ENCODE measurements at regions of chr9 and their contacts with region 1.

Region 1: DNA sequence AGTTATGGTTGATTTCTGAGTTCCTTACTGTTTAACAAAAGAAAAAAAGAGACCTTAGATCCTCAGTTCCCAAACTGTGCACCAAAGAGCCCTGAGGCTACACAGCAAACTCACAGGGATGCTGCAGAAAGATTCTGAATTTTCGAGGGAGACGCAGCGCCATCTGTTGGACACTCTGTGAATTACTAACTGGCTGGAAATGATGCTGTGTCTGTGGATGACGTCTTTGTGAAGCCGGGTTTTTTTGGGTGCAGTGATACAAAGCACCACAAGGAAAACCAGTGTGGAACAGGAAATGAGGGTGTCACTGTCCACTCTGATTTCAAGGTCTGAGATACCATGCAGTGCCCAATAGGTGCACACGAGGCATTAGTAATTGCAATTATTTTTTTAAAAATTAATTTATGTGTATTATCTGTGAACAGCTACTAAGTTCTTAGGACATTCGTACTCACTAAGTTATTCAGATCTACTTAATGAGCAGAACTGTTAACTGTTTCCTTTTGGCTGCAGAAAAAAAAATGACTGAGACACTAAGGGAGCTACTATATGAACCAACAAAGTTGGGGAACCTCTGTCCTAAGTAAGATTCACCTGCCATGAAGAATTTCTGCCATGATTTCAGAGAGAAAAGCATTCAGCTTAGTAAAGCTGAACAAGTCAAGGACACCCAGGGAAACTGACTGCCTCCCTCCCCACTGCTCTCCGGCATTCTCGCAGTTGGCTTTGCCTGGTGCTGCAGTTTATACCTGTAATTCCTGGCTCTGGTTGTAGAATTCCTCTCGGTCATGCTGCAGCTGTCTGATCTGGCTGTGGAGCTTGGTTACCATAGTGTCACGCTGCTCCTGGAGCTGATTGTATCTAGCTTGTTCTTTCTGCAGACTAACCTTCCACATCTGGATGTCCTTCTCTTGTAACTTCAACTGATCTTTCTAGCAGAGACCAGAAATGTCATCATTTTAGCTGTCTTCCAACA is 23.4 kb downstream of the SPACA9 start:
- DNase-seq: peak; percentile 40
- H3K4me3 ChIP-seq: no peak overlapping the region
- H3K27me3 ChIP-seq: no peaks in the 10 kb centered on the region
- CTCF ChIP-seq: peak; percentile 91

Region 2: DNA sequence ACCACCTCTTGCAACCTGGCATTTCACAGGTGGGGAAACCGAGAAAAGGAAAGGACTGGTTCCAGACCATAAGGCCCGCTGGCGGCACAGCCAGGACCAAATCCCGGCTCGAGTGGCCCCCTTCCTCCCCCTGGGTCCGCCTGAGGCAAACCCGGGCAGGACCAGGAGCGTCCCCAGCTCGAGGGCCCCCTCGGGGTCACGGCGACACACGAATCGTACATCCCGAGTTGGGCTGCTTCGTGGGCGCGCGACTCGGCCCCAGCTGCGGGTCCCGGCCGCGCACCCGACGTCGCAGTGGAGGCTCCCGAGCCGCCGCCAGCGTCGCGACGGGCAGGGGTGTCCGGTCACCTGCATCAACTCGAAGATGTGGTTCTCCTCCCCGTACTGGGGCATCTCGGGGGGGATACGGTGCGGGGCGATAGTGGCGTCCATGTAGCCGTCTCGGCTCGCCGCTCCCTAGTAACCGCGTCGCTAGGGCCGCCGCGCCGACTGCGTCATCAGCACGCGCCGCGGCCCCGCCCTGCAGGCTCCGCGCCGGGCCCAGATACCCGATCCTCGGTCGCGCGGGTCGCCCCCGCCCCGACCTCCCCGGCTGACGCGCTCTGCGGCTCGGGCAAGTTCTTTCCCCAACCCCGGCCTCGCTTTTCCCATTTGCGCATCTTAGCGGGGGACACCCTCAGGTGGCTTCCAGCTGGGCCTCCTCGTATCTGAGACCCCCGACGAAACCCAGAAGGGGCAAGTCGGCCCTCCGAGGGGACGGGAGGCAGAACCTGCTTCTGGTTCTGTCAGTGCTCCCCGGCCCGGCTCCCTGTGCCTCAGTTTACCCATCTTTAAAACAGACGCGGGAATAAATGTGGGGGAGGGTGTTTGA is 24.1 kb before region 1 on chr9 and contains the start of gene AK8:
- CTCF ChIA-PET with region 1: interaction called, 21 read pairs
- POLR2A ChIA-PET with region 1: no interaction called
- DNase-seq: no peak
- H3K4me3 ChIP-seq: peak within 1 kb of the TSS; percentile 95
- H3K27me3 ChIP-seq: no peaks in the 10 kb centered on the region
- CTCF ChIP-seq: no peak
- polyA plus RNA-seq, gene AK8: 0.29 and 0.53 TPM in 2 replicates

Region 3: GRCh38 chr9:132919614-132920268 is 17.6 kb after region 1 on chr9:
- CTCF ChIA-PET with region 1: interaction called, 50 read pairs
- POLR2A ChIA-PET with region 1: no interaction called
- DNase-seq: no peak
- H3K4me3 ChIP-seq: no peak overlapping the region
- H3K27me3 ChIP-seq: no peaks in the 10 kb centered on the region
- CTCF ChIP-seq: no peak

Region 4: GRCh38 chr9:132927704-132928103 is 25.6 kb after region 1 on chr9:
- CTCF ChIA-PET with region 1: interaction called, 13 read pairs
- POLR2A ChIA-PET with region 1: no interaction called
- DNase-seq: no peak
- H3K4me3 ChIP-seq: no peak overlapping the region
- H3K27me3 ChIP-seq: no peaks in the 10 kb centered on the region
- CTCF ChIP-seq: no peak

Region 5: DNA sequence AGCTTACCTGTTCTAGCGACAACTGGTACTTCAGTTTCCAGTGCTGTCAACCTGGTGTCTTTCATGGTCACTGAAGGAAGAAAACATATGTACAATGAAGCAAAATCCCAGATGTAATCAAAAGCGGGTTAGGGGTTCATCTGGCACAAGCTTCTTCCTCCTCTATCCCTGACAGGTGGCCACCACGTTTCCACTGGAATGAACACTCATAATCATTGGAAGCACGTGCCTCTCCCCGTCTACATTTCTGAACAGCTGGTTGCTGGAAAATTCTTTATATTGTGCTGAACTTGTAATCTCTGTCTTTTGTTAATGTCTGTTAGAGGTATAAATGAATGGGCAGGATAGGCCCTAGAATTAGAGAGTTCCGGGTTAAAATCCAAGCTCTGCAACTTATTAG is 32.9 kb after region 1 on chr9:
- CTCF ChIA-PET with region 1: interaction called, 12 read pairs
- POLR2A ChIA-PET with region 1: no interaction called
- DNase-seq: no peak
- H3K4me3 ChIP-seq: no peak overlapping the region
- H3K27me3 ChIP-seq: no peaks in the 10 kb centered on the region
- CTCF ChIP-seq: no peak

Region 6: GRCh38 chr9:132973713-132974112 is 71.6 kb after region 1 on chr9:
- CTCF ChIA-PET with region 1: interaction called, 21 read pairs
- POLR2A ChIA-PET with region 1: no interaction called
- DNase-seq: no peak
- H3K4me3 ChIP-seq: no peak overlapping the region
- H3K27me3 ChIP-seq: peaks cover 17% of the 10 kb centered on the region
- CTCF ChIP-seq: no peak

Region 7: DNA sequence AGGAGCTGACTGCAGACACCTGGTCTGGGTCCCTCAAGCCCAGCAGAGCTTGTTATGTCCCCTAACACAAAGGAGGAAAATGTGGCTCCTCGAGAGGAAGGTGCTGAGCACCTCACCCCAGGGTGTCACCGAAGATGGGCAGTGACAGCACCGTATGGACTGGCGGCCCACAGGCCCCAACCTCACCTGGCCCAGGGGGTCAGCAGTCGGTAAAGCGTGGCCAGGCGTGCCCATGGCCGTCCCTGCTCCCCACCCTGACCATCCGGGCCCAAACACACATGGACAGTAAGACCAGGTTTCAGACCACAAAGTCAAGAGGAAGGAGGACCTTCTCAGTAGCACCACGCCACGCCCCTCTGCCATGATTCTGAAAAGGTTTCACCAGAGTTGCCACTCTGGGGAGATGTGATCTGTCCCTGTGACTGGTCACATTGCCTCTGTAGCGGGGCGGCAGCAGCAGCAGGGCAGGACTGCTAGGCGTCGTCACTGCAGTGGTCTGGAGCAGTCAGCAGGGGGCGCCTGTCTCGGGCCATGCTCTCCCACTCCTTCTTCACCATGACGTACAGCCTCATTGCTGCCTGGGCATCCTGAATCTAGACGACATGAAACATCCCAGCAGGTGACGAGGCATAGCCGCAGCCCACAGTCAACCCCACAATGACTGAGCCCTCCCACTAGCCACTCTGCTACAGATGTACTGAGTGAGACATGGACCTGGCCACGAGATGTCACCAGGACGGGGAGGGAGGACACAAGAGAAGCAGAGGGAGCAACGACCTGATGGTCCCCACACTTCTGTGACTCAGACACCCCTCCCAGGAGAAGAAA is 504.6 kb after region 1 on chr9:
- CTCF ChIA-PET with region 1: no interaction called
- POLR2A ChIA-PET with region 1: no interaction called
- DNase-seq: no peak
- H3K4me3 ChIP-seq: no peak overlapping the region
- H3K27me3 ChIP-seq: no peaks in the 10 kb centered on the region
- CTCF ChIP-seq: peak; percentile 95

Measured in BJ (cell line).